Heart right ventricle (tissue), 16 donors: ENCODE measurements at regions of chr18 and their contacts with region 1.

Region 1: GRCh38 chr18:27785815-27786471 is 391.0 kb downstream of the CDH2 start:
- DNase-seq: no peak
- ATAC-seq: no peak
- H3K4me3 ChIP-seq: no peak overlapping the region
- H3K27ac ChIP-seq: no peak overlapping the region
- H3K4me1 ChIP-seq: no peaks in the 10 kb centered on the region
- H3K27me3 ChIP-seq: no peaks in the 10 kb centered on the region
- CTCF ChIP-seq: no peak

Region 2: GRCh38 chr18:27723168-27723567 is 62.8 kb before region 1 on chr18:
- intact Hi-C with region 1: no loop called
- DNase-seq: no peak
- ATAC-seq: no peak
- H3K4me3 ChIP-seq: no peak overlapping the region
- H3K27ac ChIP-seq: no peak overlapping the region
- H3K4me1 ChIP-seq: no peaks in the 10 kb centered on the region
- H3K27me3 ChIP-seq: no peaks in the 10 kb centered on the region
- CTCF ChIP-seq: no peak

Region 3: DNA sequence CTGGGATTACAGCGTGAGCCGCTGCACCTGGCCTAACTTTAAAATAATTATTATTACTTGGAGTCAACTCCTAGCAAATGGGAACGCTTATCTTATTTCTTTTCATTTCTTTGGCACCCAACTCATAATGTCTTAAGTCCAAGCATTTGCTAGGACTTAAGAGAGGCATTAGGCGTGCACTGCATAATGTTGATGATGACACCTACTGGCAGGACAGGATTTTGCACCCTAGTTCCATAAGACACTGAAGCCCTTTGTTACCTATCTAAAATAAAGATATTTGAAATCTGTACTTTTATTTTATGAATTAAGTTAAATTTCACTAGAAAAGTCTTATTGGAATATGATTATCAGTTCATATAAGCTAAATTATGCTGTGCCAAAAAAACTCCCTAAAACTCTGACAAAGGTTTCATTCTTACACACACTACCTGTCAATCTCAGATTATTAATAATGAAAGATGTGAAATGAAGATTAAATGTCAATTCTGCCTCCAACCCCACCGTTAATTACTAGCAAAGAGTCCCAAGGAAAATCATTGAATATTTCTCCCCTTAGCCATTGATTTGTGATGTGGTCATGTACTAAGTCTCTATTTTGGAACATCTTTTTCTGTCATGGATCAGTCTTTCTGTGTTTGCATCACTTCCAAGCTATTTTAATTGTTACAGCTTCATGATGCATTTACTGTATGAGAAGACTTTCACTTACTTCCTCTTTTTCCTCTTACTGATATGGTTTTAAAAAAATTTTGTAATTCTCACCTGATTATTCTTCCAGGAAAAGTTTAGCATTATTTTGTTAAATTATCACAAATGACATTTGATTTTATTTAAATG is 403.7 kb after region 1 on chr18:
- intact Hi-C with region 1: loop called in 1 of 10 experiments (anchors 10 kb)
- DNase-seq: no peak
- ATAC-seq: peak in 1 of 8 donors; percentile 33
- H3K4me3 ChIP-seq: no peak overlapping the region
- H3K27ac ChIP-seq: no peak overlapping the region
- H3K4me1 ChIP-seq: no peaks in the 10 kb centered on the region
- H3K27me3 ChIP-seq: no peaks in the 10 kb centered on the region
- CTCF ChIP-seq: peak in 8 of 9 donors; percentile 20 to 57 (median 37)